RWPE1 (cell line): ENCODE measurements at regions of chr20 and their contacts with region 1.

Region 1: DNA sequence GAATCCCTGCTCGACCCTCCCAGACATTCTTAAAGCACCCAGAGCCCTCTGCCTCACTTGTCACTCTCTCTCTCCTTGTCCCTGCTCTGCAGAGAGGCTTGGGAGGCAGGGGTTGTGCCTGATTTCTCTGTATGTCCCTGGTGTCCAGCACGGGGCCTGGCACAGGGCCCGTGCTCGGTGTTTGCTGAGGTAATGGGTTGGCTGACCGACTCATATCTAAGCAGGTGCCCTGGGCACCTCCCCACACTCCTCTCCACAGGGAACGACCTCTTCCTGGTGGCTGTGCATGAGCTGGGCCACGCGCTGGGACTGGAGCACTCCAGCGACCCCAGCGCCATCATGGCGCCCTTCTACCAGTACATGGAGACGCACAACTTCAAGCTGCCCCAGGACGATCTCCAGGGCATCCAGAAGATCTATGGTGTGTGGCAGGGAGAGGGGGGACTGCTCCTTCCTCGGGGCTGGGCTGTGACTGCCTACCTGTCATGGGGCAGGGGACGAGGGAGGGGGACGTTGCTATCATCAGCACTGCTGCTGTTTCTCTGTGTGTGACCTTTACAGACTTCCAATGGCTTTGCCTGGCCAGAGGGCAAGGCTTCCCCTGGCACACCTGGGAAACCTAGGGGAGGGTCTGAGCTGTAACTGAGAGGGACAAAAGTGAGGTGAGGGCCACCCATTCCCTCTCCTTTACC is 14.2 kb downstream of the MMP24OS start:
- DNase-seq: no peak
- H3K27ac ChIP-seq: peak overlapping the region; percentile 89
- CTCF ChIP-seq: no peak

Region 2: DNA sequence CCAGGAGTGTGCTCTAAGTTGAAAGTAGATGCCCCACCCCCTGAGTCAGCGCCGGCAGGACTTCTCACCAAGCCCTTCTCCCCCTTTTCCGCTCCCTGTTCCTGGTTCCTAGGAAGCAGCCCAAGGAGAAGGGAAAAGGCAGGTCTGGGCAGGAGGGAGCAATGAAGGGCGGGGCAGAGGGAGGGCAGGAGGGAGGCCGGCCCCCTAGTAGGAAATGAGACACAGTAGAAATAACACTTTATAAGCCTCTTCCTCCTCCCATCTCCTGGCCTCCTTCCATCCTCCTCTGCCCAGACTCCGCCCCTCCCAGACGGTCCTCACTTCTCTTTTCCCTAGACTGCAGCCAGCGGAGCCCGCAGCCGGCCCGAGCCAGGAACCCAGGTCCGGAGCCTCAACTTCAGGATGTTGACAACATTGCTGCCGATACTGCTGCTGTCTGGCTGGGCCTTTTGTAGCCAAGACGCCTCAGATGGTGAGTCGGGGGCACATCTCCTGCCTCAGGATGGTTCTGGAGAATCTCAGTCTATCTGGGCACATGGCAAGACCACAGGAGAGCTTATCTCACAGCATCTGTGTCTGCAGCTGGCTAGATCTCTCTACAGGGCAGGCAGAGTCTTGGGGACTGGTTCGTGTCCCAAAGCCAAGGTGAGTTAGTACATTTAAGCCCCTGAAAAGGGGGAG is 91.8 kb before region 1 on chr20 and contains the start of gene PROCR:
- CTCF ChIA-PET with region 1: no interaction called
- POLR2A ChIA-PET with region 1: no interaction called
- DNase-seq: peak; percentile 99
- H3K27ac ChIP-seq: peak within 1 kb of the TSS; percentile 84
- CTCF ChIP-seq: no peak

Region 3: GRCh38 chr20:35277531-35278395 is 14.1 kb after region 1 on chr20 and contains the start of gene MMP24OS:
- CTCF ChIA-PET with region 1: interaction called, 10 read pairs
- POLR2A ChIA-PET with region 1: interaction called, 4 read pairs
- DNase-seq: peak; percentile 94
- H3K27ac ChIP-seq: peak within 1 kb of the TSS; percentile 95
- CTCF ChIP-seq: no peak; the same call in 1 of the 2 replicates

Region 4: DNA sequence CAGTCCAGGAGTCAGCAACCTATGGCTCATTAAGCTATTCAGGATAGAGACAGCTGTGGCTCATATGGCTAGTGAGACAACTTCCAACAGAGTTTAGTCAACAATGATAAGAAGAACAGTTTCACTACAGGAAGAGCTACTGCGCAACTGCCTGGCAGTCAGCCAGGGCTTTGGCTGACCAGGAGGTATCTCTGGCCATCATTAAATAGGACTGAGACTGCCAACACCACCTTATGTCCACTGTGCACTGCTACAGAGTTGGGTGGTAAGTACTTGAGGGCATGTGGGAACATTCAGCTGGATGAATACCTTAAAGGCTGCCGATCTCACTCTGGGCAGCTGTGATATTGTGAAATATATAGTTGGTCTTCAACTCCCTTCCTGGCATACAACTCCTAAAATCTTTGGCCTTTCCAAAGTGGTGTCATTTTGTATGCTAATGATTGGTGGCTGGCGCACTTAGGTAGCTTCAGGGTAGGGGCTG is 80.7 kb after region 1 on chr20:
- CTCF ChIA-PET with region 1: no interaction called
- POLR2A ChIA-PET with region 1: no interaction called
- DNase-seq: peak; percentile 57
- H3K27ac ChIP-seq: peak overlapping the region; percentile 72
- CTCF ChIP-seq: no peak

Region 5: DNA sequence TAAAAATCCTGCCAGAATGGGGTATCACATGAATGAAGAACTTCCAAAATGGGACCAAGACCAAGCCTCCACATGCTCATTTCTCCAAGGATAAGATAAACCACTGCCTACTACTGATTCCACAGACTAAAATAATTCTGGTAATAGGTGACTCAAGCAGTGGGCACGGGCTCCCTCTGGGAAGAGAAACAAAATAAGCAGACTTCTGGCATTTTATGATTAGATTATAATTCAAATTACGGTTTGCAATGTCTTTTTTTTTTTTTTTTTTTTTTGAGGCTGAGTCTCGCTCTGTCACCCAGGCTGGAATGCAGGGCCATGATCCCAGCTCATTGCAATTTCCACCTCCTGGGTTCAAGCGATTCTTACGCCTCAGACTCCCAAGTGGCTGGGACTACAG is 132.1 kb after region 1 on chr20:
- CTCF ChIA-PET with region 1: no interaction called
- POLR2A ChIA-PET with region 1: no interaction called
- DNase-seq: no peak
- H3K27ac ChIP-seq: no peak overlapping the region
- CTCF ChIP-seq: no peak